ENCODE measurements at regions of chr12 and their contacts with region 1.

Region 1: GRCh38 chr12:51281202-51281924 is 11.1 kb upstream of the SMAGP start:
- DNase-seq: peak; percentile 23
- H3K4me3 ChIP-seq: no peak overlapping the region
- H3K27me3 ChIP-seq: no peaks in the 10 kb centered on the region
- CTCF ChIP-seq: no peak

Region 2: DNA sequence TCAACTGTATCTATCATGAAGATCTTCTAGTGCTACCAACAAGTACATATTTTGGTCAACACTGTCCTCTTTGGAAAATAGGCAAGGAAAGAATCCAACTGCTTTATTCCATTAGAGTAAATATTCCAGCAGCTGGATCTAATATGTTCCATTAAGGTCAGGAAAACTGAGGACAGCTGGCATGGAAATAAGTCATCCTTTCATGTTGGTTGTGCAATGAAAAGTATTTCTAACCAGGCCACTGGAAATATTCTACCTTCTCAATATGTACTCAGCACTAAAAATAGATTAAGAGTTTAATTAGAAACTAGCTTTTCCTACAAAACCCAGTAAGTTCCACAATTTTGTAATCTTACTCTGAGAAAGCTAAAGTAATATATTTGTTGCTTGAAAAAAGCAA is 309.4 kb before region 1 on chr12:
- CTCF ChIA-PET with region 1: no interaction called
- POLR2A ChIA-PET with region 1: no interaction called
- DNase-seq: peak; percentile 52
- H3K4me3 ChIP-seq: no peak overlapping the region
- H3K27me3 ChIP-seq: no peaks in the 10 kb centered on the region
- CTCF ChIP-seq: no peak

Region 3: GRCh38 chr12:51270067-51270970 is 11.0 kb before region 1 on chr12 and contains the start of gene SMAGP:
- CTCF ChIA-PET with region 1: interaction called, 3 read pairs
- POLR2A ChIA-PET with region 1: interaction called, 13 read pairs
- DNase-seq: no peak
- H3K4me3 ChIP-seq: peak within 1 kb of the TSS; percentile 46
- H3K27me3 ChIP-seq: no peaks in the 10 kb centered on the region
- CTCF ChIP-seq: no peak
- polyA plus RNA-seq, gene SMAGP: 54.7 and 57.6 TPM in 2 replicates

Region 4: GRCh38 chr12:51536159-51536558 is 254.8 kb after region 1 on chr12:
- CTCF ChIA-PET with region 1: no interaction called
- POLR2A ChIA-PET with region 1: no interaction called
- DNase-seq: no peak
- H3K4me3 ChIP-seq: no peak overlapping the region
- H3K27me3 ChIP-seq: no peaks in the 10 kb centered on the region
- CTCF ChIP-seq: peak; percentile 28; the same call in 1 of the 2 replicates